Natural killer cell (primary cell): ENCODE measurements at regions of chr10 and their contacts with region 1.

Region 1: DNA sequence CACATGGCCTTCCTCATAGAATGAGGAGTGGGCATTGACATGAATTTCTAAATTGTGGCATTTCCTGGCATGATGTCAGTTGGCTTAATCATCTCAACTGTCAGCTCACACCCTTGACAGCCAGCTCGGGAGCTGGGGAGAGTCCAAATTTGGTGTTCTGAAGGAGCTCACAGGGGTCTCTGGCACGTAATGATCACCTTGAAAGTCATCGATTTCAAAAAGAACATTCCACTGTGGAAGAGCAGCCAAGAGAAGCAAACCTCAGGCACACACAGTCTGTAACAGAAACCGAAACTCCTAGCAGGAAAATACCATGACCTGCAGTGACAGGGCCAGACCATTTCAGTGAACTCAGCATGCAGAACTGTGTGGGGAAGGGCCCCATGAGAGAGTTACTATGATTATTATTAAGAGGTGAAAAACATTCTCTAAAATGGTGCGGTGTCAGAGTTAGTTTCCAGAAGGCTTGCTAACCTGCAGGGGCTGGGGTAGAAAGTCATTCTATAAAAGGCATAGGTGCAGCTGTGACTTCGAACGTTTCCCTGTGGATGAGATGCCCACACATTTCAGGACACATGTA is 26.4 kb upstream of the KLF6 start:
- DNase-seq: peak; percentile 47 to 76
- ATAC-seq: peak; percentile 37 to 71 (median 56)
- H3K4me3 ChIP-seq: no peak overlapping the region
- H3K4me3 Mint-ChIP-seq: peak overlapping the region; percentile 87
- H3K27ac ChIP-seq: peak overlapping the region; percentile 100
- H3K27ac Mint-ChIP-seq: no peak overlapping the region
- H3K4me1 ChIP-seq: peaks cover 68% of the 10 kb centered on the region
- H3K4me1 Mint-ChIP-seq: peaks cover 66 to 80% of the 10 kb centered on the region in 2 donors
- H3K27me3 ChIP-seq: no peaks in the 10 kb centered on the region
- H3K27me3 Mint-ChIP-seq: no peaks in the 10 kb centered on the region
- CTCF ChIP-seq: no peak

Region 2: GRCh38 chr10:3785257-3785850 is 26.0 kb before region 1 on chr10:
- intact Hi-C with region 1: loop called (anchors 1 kb)
- DNase-seq: peak; percentile 99 to 100
- ATAC-seq: peak; percentile 64 to 88 (median 76)
- H3K4me3 ChIP-seq: peak overlapping the region; percentile 86
- H3K4me3 Mint-ChIP-seq: peak overlapping the region; percentile 99
- H3K27ac ChIP-seq: peak overlapping the region; percentile 93
- H3K27ac Mint-ChIP-seq: peak overlapping the region; percentile 100
- H3K4me1 ChIP-seq: peaks cover 22% of the 10 kb centered on the region
- H3K4me1 Mint-ChIP-seq: peaks cover 49 to 56% of the 10 kb centered on the region in 2 donors
- H3K27me3 ChIP-seq: no peaks in the 10 kb centered on the region
- H3K27me3 Mint-ChIP-seq: peaks cover 0 to 8% of the 10 kb centered on the region in 2 donors
- CTCF ChIP-seq: no peak

Region 3: GRCh38 chr10:3828404-3829155 is 17.2 kb after region 1 on chr10:
- intact Hi-C with region 1: loop called (anchors 2 kb)
- DNase-seq: peak in 1 of 2 donors; percentile 73
- ATAC-seq: peak; percentile 65 to 83 (median 68)
- H3K4me3 ChIP-seq: peak overlapping the region; percentile 39
- H3K4me3 Mint-ChIP-seq: peak overlapping the region; percentile 78
- H3K27ac ChIP-seq: peak overlapping the region; percentile 80
- H3K27ac Mint-ChIP-seq: peak overlapping the region; percentile 93 to 96
- H3K4me1 ChIP-seq: peaks cover 12% of the 10 kb centered on the region
- H3K4me1 Mint-ChIP-seq: peaks cover 16 to 24% of the 10 kb centered on the region in 2 donors
- H3K27me3 ChIP-seq: no peaks in the 10 kb centered on the region
- H3K27me3 Mint-ChIP-seq: no peaks in the 10 kb centered on the region
- CTCF ChIP-seq: no peak

Region 4: GRCh38 chr10:3852147-3852904 is 40.9 kb after region 1 on chr10:
- intact Hi-C with region 1: loop called (anchors 1 kb)
- DNase-seq: peak in 1 of 2 donors; percentile 82
- ATAC-seq: peak; percentile 67 to 90 (median 85)
- H3K4me3 ChIP-seq: no peak overlapping the region
- H3K4me3 Mint-ChIP-seq: no peak overlapping the region
- H3K27ac ChIP-seq: peak overlapping the region; percentile 59
- H3K27ac Mint-ChIP-seq: peak overlapping the region; percentile 6 to 86
- H3K4me1 ChIP-seq: peaks cover 14% of the 10 kb centered on the region
- H3K4me1 Mint-ChIP-seq: peaks cover 15 to 26% of the 10 kb centered on the region in 2 donors
- H3K27me3 ChIP-seq: no peaks in the 10 kb centered on the region
- H3K27me3 Mint-ChIP-seq: no peaks in the 10 kb centered on the region
- CTCF ChIP-seq: no peak

Region 5: DNA sequence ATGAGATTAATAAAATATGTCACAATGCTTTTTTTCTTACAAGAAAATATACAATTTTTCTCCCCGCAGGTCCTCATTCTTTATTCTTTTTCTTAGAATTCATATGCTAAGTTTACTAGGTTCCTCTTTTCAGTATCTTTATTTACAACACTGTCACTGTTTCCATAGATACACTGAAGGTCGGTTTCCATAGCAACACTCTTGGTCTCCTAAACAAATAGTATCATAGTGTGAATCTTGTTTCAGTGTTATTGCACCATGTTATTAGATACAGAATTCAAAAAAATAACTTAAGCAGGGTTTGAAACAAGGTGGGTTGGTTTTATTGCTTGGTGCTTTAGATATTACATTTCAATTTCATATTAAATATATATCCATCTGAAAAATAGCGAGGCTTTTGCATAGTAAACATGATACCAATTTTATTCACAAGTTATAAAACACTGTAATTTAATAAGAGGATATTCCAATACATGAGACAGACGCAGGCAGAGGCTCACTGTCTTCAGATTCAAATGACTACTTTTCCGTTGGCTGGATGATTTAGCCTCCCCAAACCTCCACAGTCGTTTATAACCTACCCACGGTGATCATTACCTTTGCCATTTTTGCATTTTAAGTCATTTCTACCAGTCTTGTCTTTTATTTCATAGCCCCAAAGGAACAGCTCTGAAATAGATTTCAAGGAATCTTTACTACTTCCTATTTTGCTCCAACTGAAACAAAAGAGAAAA is 62.5 kb after region 1 on chr10:
- intact Hi-C with region 1: loop called (anchors 1 kb)
- DNase-seq: peak in 1 of 2 donors; percentile 89
- ATAC-seq: peak; percentile 76 to 80 (median 78)
- H3K4me3 ChIP-seq: no peak overlapping the region
- H3K4me3 Mint-ChIP-seq: peak overlapping the region; percentile 33
- H3K27ac ChIP-seq: peak overlapping the region; percentile 89
- H3K27ac Mint-ChIP-seq: peak overlapping the region; percentile 83 to 90
- H3K4me1 ChIP-seq: peaks cover 29% of the 10 kb centered on the region
- H3K4me1 Mint-ChIP-seq: peaks cover 24 to 42% of the 10 kb centered on the region in 2 donors
- H3K27me3 ChIP-seq: no peaks in the 10 kb centered on the region
- H3K27me3 Mint-ChIP-seq: no peaks in the 10 kb centered on the region
- CTCF ChIP-seq: no peak

Region 6: GRCh38 chr10:3889961-3890522 is 78.7 kb after region 1 on chr10:
- intact Hi-C with region 1: loop called (anchors 5 kb)
- DNase-seq: no peak
- ATAC-seq: no peak
- H3K4me3 ChIP-seq: no peak overlapping the region
- H3K4me3 Mint-ChIP-seq: no peak overlapping the region
- H3K27ac ChIP-seq: no peak overlapping the region
- H3K27ac Mint-ChIP-seq: peak overlapping the region in 1 of 2 donors; percentile 31
- H3K4me1 ChIP-seq: peaks cover 42% of the 10 kb centered on the region
- H3K4me1 Mint-ChIP-seq: peaks cover 23 to 26% of the 10 kb centered on the region in 2 donors
- H3K27me3 ChIP-seq: no peaks in the 10 kb centered on the region
- H3K27me3 Mint-ChIP-seq: no peaks in the 10 kb centered on the region
- CTCF ChIP-seq: no peak